ENCODE measurements at regions of chr3 and their contacts with region 1.

Region 1: GRCh38 chr3:158644345-158644908 is at the start of gene GFM1:
- DNase-seq: peak; percentile 79 to 97 (median 86)
- ATAC-seq: peak; percentile 94
- H3K4me3 ChIP-seq: peak within 1 kb of the TSS; percentile 99
- H3K4me3 Mint-ChIP-seq: peak within 1 kb of the TSS; percentile 95
- H3K27ac ChIP-seq: peak within 1 kb of the TSS; percentile 54 to 81
- H3K27ac Mint-ChIP-seq: peak within 1 kb of the TSS; percentile 64
- H3K4me1 ChIP-seq: peaks cover 16% of the 10 kb centered on the region
- H3K4me1 Mint-ChIP-seq: peaks cover 53% of the 10 kb centered on the region
- H3K27me3 ChIP-seq: no peaks in the 10 kb centered on the region
- H3K27me3 Mint-ChIP-seq: no peaks in the 10 kb centered on the region
- CTCF ChIP-seq: peak; percentile 92
- total RNA-seq, gene GFM1: 27.5 to 29.4 TPM

Region 2: GRCh38 chr3:158570999-158571974 is 73.1 kb before region 1 on chr3 and contains the start of gene MLF1:
- CTCF ChIA-PET with region 1: interaction called, 8 read pairs
- POLR2A ChIA-PET with region 1: interaction called, 11 read pairs
- intact Hi-C with region 1: no loop called
- DNase-seq: peak; percentile 56 to 92 (median 74)
- ATAC-seq: peak; percentile 96
- H3K4me3 ChIP-seq: peak within 1 kb of the TSS; percentile 76
- H3K4me3 Mint-ChIP-seq: peak within 1 kb of the TSS; percentile 89
- H3K27ac ChIP-seq: no peak within 1 kb of the TSS
- H3K27ac Mint-ChIP-seq: peak within 1 kb of the TSS; percentile 77
- H3K4me1 ChIP-seq: peaks cover 16% of the 10 kb centered on the region
- H3K4me1 Mint-ChIP-seq: peaks cover 11% of the 10 kb centered on the region
- H3K27me3 ChIP-seq: peaks cover 12 to 18% of the 10 kb centered on the region in 2 experiments
- H3K27me3 Mint-ChIP-seq: peaks cover 58% of the 10 kb centered on the region
- CTCF ChIP-seq: no peak
- total RNA-seq, gene MLF1: 13.7 to 14.7 TPM

Region 3: GRCh38 chr3:158631991-158632390 is 12.4 kb before region 1 on chr3:
- CTCF ChIA-PET with region 1: no interaction called
- POLR2A ChIA-PET with region 1: no interaction called
- intact Hi-C with region 1: no loop called
- DNase-seq: no peak
- ATAC-seq: no peak
- H3K4me3 ChIP-seq: no peak overlapping the region
- H3K4me3 Mint-ChIP-seq: no peak overlapping the region
- H3K27ac ChIP-seq: no peak overlapping the region
- H3K27ac Mint-ChIP-seq: no peak overlapping the region
- H3K4me1 ChIP-seq: no peaks in the 10 kb centered on the region
- H3K4me1 Mint-ChIP-seq: no peaks in the 10 kb centered on the region
- H3K27me3 ChIP-seq: peaks cover 5 to 10% of the 10 kb centered on the region in 2 experiments
- H3K27me3 Mint-ChIP-seq: peaks cover 28% of the 10 kb centered on the region
- CTCF ChIP-seq: no peak

Region 4: GRCh38 chr3:158659454-158660237 is 15.2 kb after region 1 on chr3:
- CTCF ChIA-PET with region 1: interaction called, 38 read pairs
- POLR2A ChIA-PET with region 1: interaction called, 12 read pairs
- intact Hi-C with region 1: no loop called
- DNase-seq: peak; percentile 10 to 71 (median 35)
- ATAC-seq: peak; percentile 88
- H3K4me3 ChIP-seq: no peak overlapping the region
- H3K4me3 Mint-ChIP-seq: no peak overlapping the region
- H3K27ac ChIP-seq: no peak overlapping the region
- H3K27ac Mint-ChIP-seq: no peak overlapping the region
- H3K4me1 ChIP-seq: no peaks in the 10 kb centered on the region
- H3K4me1 Mint-ChIP-seq: peaks cover 10% of the 10 kb centered on the region
- H3K27me3 ChIP-seq: no peaks in the 10 kb centered on the region
- H3K27me3 Mint-ChIP-seq: no peaks in the 10 kb centered on the region
- CTCF ChIP-seq: peak; percentile 73

Region 5: GRCh38 chr3:158672293-158673176 is 28.1 kb after region 1 on chr3 and contains the start of gene LXN:
- CTCF ChIA-PET with region 1: interaction called, 13 read pairs
- POLR2A ChIA-PET with region 1: interaction called, 13 read pairs
- intact Hi-C with region 1: loop called in 1 of 2 experiments (anchors 2 kb)
- DNase-seq: peak; percentile 60 to 92 (median 74)
- ATAC-seq: peak; percentile 99
- H3K4me3 ChIP-seq: peak within 1 kb of the TSS; percentile 74
- H3K4me3 Mint-ChIP-seq: peak within 1 kb of the TSS; percentile 94
- H3K27ac ChIP-seq: peak within 1 kb of the TSS; percentile 41 to 49
- H3K27ac Mint-ChIP-seq: peak within 1 kb of the TSS; percentile 85
- H3K4me1 ChIP-seq: peaks cover 19% of the 10 kb centered on the region
- H3K4me1 Mint-ChIP-seq: peaks cover 32% of the 10 kb centered on the region
- H3K27me3 ChIP-seq: no peaks in the 10 kb centered on the region
- H3K27me3 Mint-ChIP-seq: no peaks in the 10 kb centered on the region
- CTCF ChIP-seq: peak; percentile 80
- total RNA-seq, gene LXN: 2.1 to 3.0 TPM

Region 6: GRCh38 chr3:158713094-158713499 is 68.7 kb after region 1 on chr3:
- CTCF ChIA-PET with region 1: no interaction called
- POLR2A ChIA-PET with region 1: no interaction called
- intact Hi-C with region 1: no loop called
- DNase-seq: no peak
- ATAC-seq: no peak
- H3K4me3 ChIP-seq: no peak overlapping the region
- H3K4me3 Mint-ChIP-seq: no peak overlapping the region
- H3K27ac ChIP-seq: no peak overlapping the region
- H3K27ac Mint-ChIP-seq: no peak overlapping the region
- H3K4me1 ChIP-seq: no peaks in the 10 kb centered on the region
- H3K4me1 Mint-ChIP-seq: no peaks in the 10 kb centered on the region
- H3K27me3 ChIP-seq: no peaks in the 10 kb centered on the region
- H3K27me3 Mint-ChIP-seq: no peaks in the 10 kb centered on the region
- CTCF ChIP-seq: no peak

Region 7: GRCh38 chr3:158801696-158802408 is 157.4 kb after region 1 on chr3 and contains the start of gene MFSD1:
- CTCF ChIA-PET with region 1: interaction called, 16 read pairs
- POLR2A ChIA-PET with region 1: interaction called, 9 read pairs
- intact Hi-C with region 1: loop called in 1 of 2 experiments (anchors 5 kb)
- DNase-seq: peak; percentile 71 to 95 (median 83)
- ATAC-seq: peak; percentile 91
- H3K4me3 ChIP-seq: peak within 1 kb of the TSS; percentile 89
- H3K4me3 Mint-ChIP-seq: peak within 1 kb of the TSS; percentile 92
- H3K27ac ChIP-seq: peak within 1 kb of the TSS; percentile 78 to 80
- H3K27ac Mint-ChIP-seq: peak within 1 kb of the TSS; percentile 91
- H3K4me1 ChIP-seq: peaks cover 18% of the 10 kb centered on the region
- H3K4me1 Mint-ChIP-seq: peaks cover 58% of the 10 kb centered on the region
- H3K27me3 ChIP-seq: no peaks in the 10 kb centered on the region
- H3K27me3 Mint-ChIP-seq: no peaks in the 10 kb centered on the region
- CTCF ChIP-seq: no peak
- total RNA-seq, gene MFSD1: 7.2 to 7.6 TPM

Region 8: DNA sequence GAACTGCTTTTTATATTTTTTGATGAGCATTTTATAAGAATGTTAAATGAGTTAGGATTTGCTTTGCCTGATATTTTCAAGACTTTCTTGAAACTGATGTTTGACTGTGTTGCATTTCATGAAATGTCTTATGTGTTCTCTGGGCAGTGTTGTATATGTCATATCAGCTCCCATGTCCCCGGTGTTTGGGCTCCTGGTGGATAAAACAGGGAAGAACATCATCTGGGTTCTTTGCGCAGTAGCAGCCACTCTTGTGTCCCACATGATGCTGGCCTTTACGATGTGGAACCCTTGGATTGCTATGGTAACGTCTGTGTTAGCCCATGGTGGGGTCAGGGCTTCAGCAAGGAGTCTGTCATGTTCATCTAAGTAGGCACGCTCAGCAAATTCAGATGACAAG is 177.4 kb after region 1 on chr3:
- CTCF ChIA-PET with region 1: no interaction called
- POLR2A ChIA-PET with region 1: no interaction called
- intact Hi-C with region 1: no loop called
- DNase-seq: no peak
- ATAC-seq: no peak
- H3K4me3 ChIP-seq: no peak overlapping the region
- H3K4me3 Mint-ChIP-seq: no peak overlapping the region
- H3K27ac ChIP-seq: no peak overlapping the region
- H3K27ac Mint-ChIP-seq: no peak overlapping the region
- H3K4me1 ChIP-seq: no peaks in the 10 kb centered on the region
- H3K4me1 Mint-ChIP-seq: no peaks in the 10 kb centered on the region
- H3K27me3 ChIP-seq: no peaks in the 10 kb centered on the region
- H3K27me3 Mint-ChIP-seq: no peaks in the 10 kb centered on the region
- CTCF ChIP-seq: no peak

Measured in CD4-positive, alpha-beta T cell (primary cell).